ENCODE measurements at regions of chr12 and their contacts with region 1.

Region 1: GRCh38 chr12:48936379-48936979 is 11.2 kb upstream of the FKBP11 start:
- DNase-seq: peak; percentile 92
- ATAC-seq: peak; percentile 79
- H3K4me3 Mint-ChIP-seq: no peak overlapping the region
- H3K27ac Mint-ChIP-seq: no peak overlapping the region
- H3K4me1 Mint-ChIP-seq: peaks cover 24% of the 10 kb centered on the region
- H3K27me3 Mint-ChIP-seq: no peaks in the 10 kb centered on the region
- CTCF ChIP-seq: peak; percentile 86

Region 2: DNA sequence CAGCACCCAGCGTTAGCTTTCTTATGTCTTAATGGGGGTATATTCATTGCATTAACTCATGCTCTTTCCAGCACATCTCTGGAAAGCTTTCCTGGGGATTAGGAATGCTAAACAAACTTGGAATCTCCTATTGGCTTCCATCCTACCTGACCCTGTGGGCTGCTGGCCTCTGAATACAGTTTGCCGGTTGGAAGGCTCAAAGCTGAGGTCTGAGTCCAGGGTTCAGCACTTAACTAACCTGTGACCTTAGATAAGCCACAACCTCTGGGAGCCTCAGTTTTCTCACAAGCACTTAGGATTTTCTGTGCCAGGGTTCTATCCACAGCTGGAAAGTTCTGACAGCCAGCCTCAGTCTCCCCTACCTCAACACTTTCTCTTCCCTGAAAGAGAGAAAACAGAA is 57.9 kb before region 1 on chr12:
- CTCF ChIA-PET with region 1: no interaction called
- POLR2A ChIA-PET with region 1: no interaction called
- intact Hi-C with region 1: no loop called
- DNase-seq: no peak
- ATAC-seq: no peak
- H3K4me3 Mint-ChIP-seq: no peak overlapping the region
- H3K27ac Mint-ChIP-seq: no peak overlapping the region
- H3K4me1 Mint-ChIP-seq: no peaks in the 10 kb centered on the region
- H3K27me3 Mint-ChIP-seq: peaks cover 20% of the 10 kb centered on the region
- CTCF ChIP-seq: no peak

Region 3: DNA sequence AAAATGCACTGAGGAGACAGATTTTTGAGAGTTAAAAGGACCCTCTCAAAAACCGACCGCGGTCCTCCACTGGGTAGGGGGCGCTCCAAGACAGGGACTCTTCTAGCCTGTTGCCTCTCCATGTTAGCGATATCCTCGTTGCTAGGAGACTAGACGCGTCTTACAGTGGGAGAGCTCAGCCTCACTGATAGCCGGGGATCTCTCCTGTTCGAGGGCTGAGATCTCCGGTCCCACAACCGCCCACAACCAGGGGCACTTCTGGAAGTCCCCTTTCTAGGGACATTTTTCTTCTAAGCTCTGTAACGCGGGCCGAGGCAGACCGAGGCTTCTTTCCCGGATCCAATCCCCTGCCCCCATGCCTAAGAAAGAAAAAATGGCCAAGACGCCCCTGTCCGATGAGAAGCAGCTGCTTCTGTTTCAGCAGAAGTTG is 32.5 kb before region 1 on chr12:
- CTCF ChIA-PET with region 1: interaction called, 11 read pairs
- POLR2A ChIA-PET with region 1: no interaction called
- intact Hi-C with region 1: no loop called
- DNase-seq: peak; percentile 91
- ATAC-seq: peak; percentile 98
- H3K4me3 Mint-ChIP-seq: peak overlapping the region; percentile 58
- H3K27ac Mint-ChIP-seq: no peak overlapping the region
- H3K4me1 Mint-ChIP-seq: peaks cover 7% of the 10 kb centered on the region
- H3K27me3 Mint-ChIP-seq: no peaks in the 10 kb centered on the region
- CTCF ChIP-seq: peak; percentile 79

Region 4: DNA sequence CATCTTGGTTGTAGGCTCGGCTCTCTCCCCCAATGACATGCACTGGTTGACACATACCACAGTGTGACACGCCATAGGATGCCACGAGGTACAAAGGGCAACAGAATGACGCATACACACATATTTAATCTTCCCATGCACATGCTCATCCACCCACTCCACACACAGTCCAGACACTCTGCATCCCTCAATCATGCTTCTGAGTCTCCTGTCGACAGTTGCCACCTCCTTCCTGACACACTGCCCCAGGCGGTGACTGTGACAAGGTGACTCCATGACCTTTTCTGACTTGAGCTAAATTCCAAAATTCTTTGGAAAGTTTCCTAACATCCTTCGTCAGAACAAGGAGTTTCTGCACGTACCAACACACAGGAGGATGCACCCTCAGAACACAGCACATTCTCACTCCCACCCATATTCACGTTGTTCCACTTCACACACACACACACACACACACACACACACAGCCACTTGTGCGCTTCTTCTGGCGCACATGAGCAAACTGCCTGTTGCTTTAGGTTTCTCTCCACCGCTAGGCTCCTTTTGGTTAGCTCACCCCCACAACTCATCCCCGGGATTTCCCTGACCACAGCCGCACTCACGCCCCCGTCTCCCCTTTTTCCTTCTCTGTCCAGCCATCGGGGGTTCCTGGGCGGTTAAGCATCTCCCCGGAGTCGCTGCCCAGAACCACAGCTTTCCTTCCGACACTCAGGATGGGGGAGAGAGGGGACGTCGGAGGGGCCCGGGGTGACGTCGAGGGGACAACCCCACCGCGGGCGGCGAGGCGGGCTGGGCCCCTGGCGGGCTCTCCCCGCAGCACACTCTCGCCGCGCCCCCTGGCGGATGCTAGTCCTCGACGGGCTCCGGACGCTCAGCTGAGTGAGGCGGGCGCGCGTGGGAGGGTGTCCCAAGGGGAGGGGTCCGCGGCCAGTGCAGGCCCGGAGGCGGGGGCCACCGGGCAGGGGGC is 41.1 kb after region 1 on chr12:
- CTCF ChIA-PET with region 1: interaction called, 8 read pairs
- POLR2A ChIA-PET with region 1: interaction called, 3 read pairs
- intact Hi-C with region 1: loop called (anchors 5 kb)
- DNase-seq: peak; percentile 88
- ATAC-seq: peak; percentile 60
- H3K4me3 Mint-ChIP-seq: peak overlapping the region; percentile 3
- H3K27ac Mint-ChIP-seq: peak overlapping the region; percentile 51
- H3K4me1 Mint-ChIP-seq: peaks cover 52% of the 10 kb centered on the region
- H3K27me3 Mint-ChIP-seq: peaks cover 63% of the 10 kb centered on the region
- CTCF ChIP-seq: peak; percentile 97

Region 5: GRCh38 chr12:49264738-49265515 is 328.4 kb after region 1 on chr12 and contains the start of gene TUBA1C:
- CTCF ChIA-PET with region 1: no interaction called
- POLR2A ChIA-PET with region 1: no interaction called
- intact Hi-C with region 1: no loop called
- DNase-seq: peak; percentile 92
- ATAC-seq: peak; percentile 90
- H3K4me3 Mint-ChIP-seq: peak within 1 kb of the TSS; percentile 95
- H3K27ac Mint-ChIP-seq: peak within 1 kb of the TSS; percentile 98
- H3K4me1 Mint-ChIP-seq: peaks cover 38% of the 10 kb centered on the region
- H3K27me3 Mint-ChIP-seq: peaks cover 1% of the 10 kb centered on the region
- CTCF ChIP-seq: no peak
- total RNA-seq, gene TUBA1C: 237 to 240 TPM

Measured in activated CD8-positive, alpha-beta T cell treated with anti-CD3 and anti-CD28 coated beads for 36 hours (primary cell).